ENCODE measurements at regions of chr12 and their contacts with region 1.

Region 1: DNA sequence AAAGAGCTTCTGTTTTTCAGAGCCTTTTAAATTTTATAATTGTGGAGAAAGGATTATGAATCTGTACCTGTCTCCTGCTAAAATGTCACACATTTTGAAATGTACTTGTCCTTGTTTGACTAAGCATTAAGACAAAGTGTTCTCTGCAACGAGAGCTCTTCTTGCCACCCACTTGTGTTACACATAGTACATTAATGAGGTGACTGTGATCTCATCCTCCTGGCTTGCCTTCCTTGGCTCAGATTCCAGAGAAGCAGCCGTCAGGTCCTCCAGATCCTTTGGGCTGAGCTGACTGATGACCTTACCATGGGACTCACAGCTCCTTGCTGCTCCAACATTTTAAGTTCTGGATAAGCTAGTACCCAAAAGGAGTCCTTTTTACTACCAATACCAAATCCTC is 81.4 kb downstream of the BBS10 start:
- DNase-seq: peak in 4 of 5 donors; percentile 28 to 82 (median 66)
- ATAC-seq: peak; percentile 93 to 98 (median 97)
- H3K4me3 ChIP-seq: no peak overlapping the region
- H3K27ac ChIP-seq: peak overlapping the region in 4 of 12 donors; percentile 16 to 40 (median 32)
- H3K4me1 ChIP-seq: peaks cover 0 to 14% (median 0%) of the 10 kb centered on the region in 12 donors
- H3K27me3 ChIP-seq: peaks cover 0 to 4% (median 0%) of the 10 kb centered on the region in 9 donors
- CTCF ChIP-seq: no peak
- POLR2A ChIP-seq: no peak

Region 2: DNA sequence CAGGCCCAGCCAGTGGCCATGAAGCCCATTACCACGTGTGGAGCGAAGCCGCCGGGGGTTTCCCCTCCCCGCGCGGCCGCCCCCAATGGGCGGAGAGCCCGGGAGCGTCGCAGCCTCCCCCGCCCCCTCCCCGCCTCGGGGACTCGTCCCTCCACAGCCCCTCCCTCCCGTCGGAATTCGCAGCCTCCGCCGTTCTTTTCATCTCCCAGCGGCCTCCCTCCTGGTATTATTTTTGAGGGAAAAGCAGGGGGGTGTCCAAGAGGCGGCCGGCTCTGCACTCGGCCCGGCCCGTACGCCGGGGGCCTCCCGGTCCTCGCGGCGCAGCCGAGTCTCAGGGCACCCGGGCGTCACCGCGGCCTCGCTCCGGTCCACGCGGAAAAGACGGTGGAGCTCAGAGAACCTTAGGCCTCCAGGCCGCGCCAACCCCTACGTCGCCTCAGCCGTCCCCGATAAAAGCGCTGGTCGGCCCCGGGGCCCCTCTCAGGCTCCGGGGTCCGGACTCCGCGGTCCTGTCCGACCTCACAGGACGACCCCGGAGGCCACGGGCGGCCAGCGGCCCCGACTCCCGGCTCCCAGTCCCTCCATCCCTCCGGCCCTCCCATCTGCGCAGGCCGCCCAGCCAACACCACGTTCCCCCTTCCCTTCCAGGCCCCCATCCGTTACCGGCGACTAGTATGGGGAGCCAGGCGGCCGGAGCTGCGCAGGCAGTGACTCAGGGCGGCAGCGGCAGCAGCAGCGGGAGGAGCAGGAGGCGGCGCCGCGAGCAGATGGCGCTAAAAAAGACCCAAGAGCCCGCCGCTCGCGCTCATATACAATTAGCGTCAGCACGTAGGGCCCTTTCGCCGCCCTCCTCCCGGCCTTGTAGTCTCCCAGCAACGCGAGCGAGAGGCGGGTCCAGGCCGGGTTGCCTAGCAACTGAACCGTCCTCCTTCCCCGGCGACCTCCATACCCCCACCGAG is 182.6 kb before region 1 on chr12 and contains the start of gene NAP1L1:
- intact Hi-C with region 1: loop called in 1 of 10 experiments (anchors 10 kb)
- DNase-seq: peak; percentile 98 to 99 (median 99)
- ATAC-seq: peak; percentile 96 to 99 (median 97)
- H3K4me3 ChIP-seq: peak within 1 kb of the TSS; percentile 76 to 97 (median 90)
- H3K27ac ChIP-seq: peak within 1 kb of the TSS; percentile 95 to 100 (median 99)
- H3K4me1 ChIP-seq: peaks cover 0 to 49% (median 28%) of the 10 kb centered on the region in 12 donors
- H3K27me3 ChIP-seq: no peaks in the 10 kb centered on the region
- CTCF ChIP-seq: no peak
- POLR2A ChIP-seq: peak; percentile 26 to 96
- total RNA-seq, gene NAP1L1: 191 to 359 (median 247) TPM

Region 3: GRCh38 chr12:76183459-76184186 is 83.2 kb before region 1 on chr12:
- intact Hi-C with region 1: no loop called
- DNase-seq: peak in 1 of 5 donors; percentile 39
- ATAC-seq: peak in 1 of 4 donors; percentile 81
- H3K4me3 ChIP-seq: no peak overlapping the region
- H3K27ac ChIP-seq: no peak overlapping the region
- H3K4me1 ChIP-seq: no peaks in the 10 kb centered on the region
- H3K27me3 ChIP-seq: no peaks in the 10 kb centered on the region
- CTCF ChIP-seq: no peak
- POLR2A ChIP-seq: no peak

Region 4: GRCh38 chr12:76208129-76208528 is 58.7 kb before region 1 on chr12:
- intact Hi-C with region 1: no loop called
- DNase-seq: no peak
- ATAC-seq: no peak
- H3K4me3 ChIP-seq: no peak overlapping the region
- H3K27ac ChIP-seq: no peak overlapping the region
- H3K4me1 ChIP-seq: no peaks in the 10 kb centered on the region
- H3K27me3 ChIP-seq: no peaks in the 10 kb centered on the region
- CTCF ChIP-seq: no peak
- POLR2A ChIP-seq: no peak

Region 5: GRCh38 chr12:76489737-76490136 is 222.9 kb after region 1 on chr12:
- intact Hi-C with region 1: no loop called
- DNase-seq: no peak
- ATAC-seq: no peak
- H3K4me3 ChIP-seq: no peak overlapping the region
- H3K27ac ChIP-seq: no peak overlapping the region
- H3K4me1 ChIP-seq: peaks cover 0 to 5% (median 0%) of the 10 kb centered on the region in 12 donors
- H3K27me3 ChIP-seq: no peaks in the 10 kb centered on the region
- CTCF ChIP-seq: no peak
- POLR2A ChIP-seq: no peak

Measured in heart left ventricle (tissue), 16 donors.